ENCODE measurements at regions of chr13 and their contacts with region 1.

Region 1: GRCh38 chr13:51814825-51815650 is 11.1 kb upstream of the DHRS12 start:
- DNase-seq: peak; percentile 83
- ATAC-seq: peak; percentile 70
- H3K4me3 Mint-ChIP-seq: peak overlapping the region; percentile 56
- H3K27ac Mint-ChIP-seq: peak overlapping the region; percentile 83
- H3K4me1 Mint-ChIP-seq: peaks cover 81% of the 10 kb centered on the region
- H3K27me3 Mint-ChIP-seq: no peaks in the 10 kb centered on the region

Region 2: GRCh38 chr13:51832471-51833152 is 17.6 kb after region 1 on chr13:
- CTCF ChIA-PET with region 1: interaction called, 154 read pairs
- POLR2A ChIA-PET with region 1: no interaction called
- intact Hi-C with region 1: loop called (anchors 1 kb)
- DNase-seq: peak; percentile 75
- ATAC-seq: peak; percentile 98
- H3K4me3 Mint-ChIP-seq: no peak overlapping the region
- H3K27ac Mint-ChIP-seq: peak overlapping the region; percentile 51
- H3K4me1 Mint-ChIP-seq: peaks cover 49% of the 10 kb centered on the region
- H3K27me3 Mint-ChIP-seq: no peaks in the 10 kb centered on the region

Region 3: GRCh38 chr13:51838240-51838846 is 23.3 kb after region 1 on chr13:
- CTCF ChIA-PET with region 1: interaction called, 50 read pairs
- POLR2A ChIA-PET with region 1: interaction called, 3 read pairs
- intact Hi-C with region 1: no loop called
- DNase-seq: peak; percentile 52
- ATAC-seq: peak; percentile 80
- H3K4me3 Mint-ChIP-seq: no peak overlapping the region
- H3K27ac Mint-ChIP-seq: no peak overlapping the region
- H3K4me1 Mint-ChIP-seq: peaks cover 22% of the 10 kb centered on the region
- H3K27me3 Mint-ChIP-seq: peaks cover 2% of the 10 kb centered on the region

Region 4: GRCh38 chr13:51844862-51845573 is 30.0 kb after region 1 on chr13 and contains the start of gene TMEM272:
- CTCF ChIA-PET with region 1: interaction called, 17 read pairs
- POLR2A ChIA-PET with region 1: no interaction called
- intact Hi-C with region 1: loop called in 1 of 2 experiments (anchors 1 kb)
- DNase-seq: peak; percentile 78
- ATAC-seq: peak; percentile 74
- H3K4me3 Mint-ChIP-seq: peak within 1 kb of the TSS; percentile 54
- H3K27ac Mint-ChIP-seq: peak within 1 kb of the TSS; percentile 20
- H3K4me1 Mint-ChIP-seq: peaks cover 14% of the 10 kb centered on the region
- H3K27me3 Mint-ChIP-seq: peaks cover 6% of the 10 kb centered on the region
- total RNA-seq, gene TMEM272: 0.18 to 0.33 TPM

Region 5: GRCh38 chr13:51906581-51906980 is 91.5 kb after region 1 on chr13:
- CTCF ChIA-PET with region 1: interaction called, 5 read pairs
- POLR2A ChIA-PET with region 1: no interaction called
- intact Hi-C with region 1: loop called in 1 of 2 experiments (anchors 5 kb)
- DNase-seq: no peak
- ATAC-seq: no peak
- H3K4me3 Mint-ChIP-seq: no peak overlapping the region
- H3K27ac Mint-ChIP-seq: no peak overlapping the region
- H3K4me1 Mint-ChIP-seq: peaks cover 28% of the 10 kb centered on the region
- H3K27me3 Mint-ChIP-seq: peaks cover 4% of the 10 kb centered on the region

Region 6: DNA sequence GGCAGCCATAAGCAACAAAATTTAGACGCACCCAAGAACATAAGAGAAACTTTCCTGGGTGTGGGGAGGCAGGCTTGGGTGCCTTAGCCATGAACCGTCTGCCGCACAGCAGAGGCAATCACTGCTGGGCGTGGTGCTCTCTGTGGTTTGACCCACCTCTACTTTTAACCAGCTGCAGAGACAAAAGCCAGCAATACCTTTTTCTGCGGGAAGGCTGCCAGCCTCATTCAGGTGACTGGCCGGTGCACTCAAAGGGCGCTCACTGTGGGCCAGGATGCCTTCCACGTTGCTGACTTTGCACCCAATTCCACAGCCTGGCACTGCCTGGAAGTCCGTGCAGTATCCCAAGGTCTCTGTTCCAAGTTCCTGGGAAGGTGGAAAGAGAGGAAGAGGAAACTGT is 127.2 kb after region 1 on chr13:
- CTCF ChIA-PET with region 1: no interaction called
- POLR2A ChIA-PET with region 1: no interaction called
- intact Hi-C with region 1: no loop called
- DNase-seq: peak; percentile 35
- ATAC-seq: peak; percentile 58
- H3K4me3 Mint-ChIP-seq: peak overlapping the region; percentile 8
- H3K27ac Mint-ChIP-seq: no peak overlapping the region
- H3K4me1 Mint-ChIP-seq: peaks cover 38% of the 10 kb centered on the region
- H3K27me3 Mint-ChIP-seq: no peaks in the 10 kb centered on the region

Region 7: GRCh38 chr13:52194184-52194868 is 379.3 kb after region 1 on chr13:
- CTCF ChIA-PET with region 1: interaction called, 7 read pairs
- POLR2A ChIA-PET with region 1: no interaction called
- intact Hi-C with region 1: loop called in 1 of 2 experiments (anchors 10 kb)
- DNase-seq: peak; percentile 92
- ATAC-seq: peak; percentile 83
- H3K4me3 Mint-ChIP-seq: peak overlapping the region; percentile 86
- H3K27ac Mint-ChIP-seq: peak overlapping the region; percentile 100
- H3K4me1 Mint-ChIP-seq: peaks cover 32% of the 10 kb centered on the region
- H3K27me3 Mint-ChIP-seq: no peaks in the 10 kb centered on the region